HEK293 (cell line): ENCODE measurements at regions of chr6 and their contacts with region 1.

Region 1: GRCh38 chr6:100865525-100865924 is 15.6 kb downstream of the ASCC3 start:
- H3K4me3 ChIP-seq: no peak overlapping the region
- H3K27ac ChIP-seq: no peak overlapping the region
- H3K4me1 ChIP-seq: no peaks in the 10 kb centered on the region
- CTCF ChIP-seq: no peak

Region 2: GRCh38 chr6:100880853-100881706 is 15.6 kb after region 1 on chr6 and contains the start of gene ASCC3:
- CTCF ChIA-PET with region 1: interaction called, 4 read pairs
- POLR2A ChIA-PET with region 1: interaction called, 12 read pairs
- H3K4me3 ChIP-seq: peak within 1 kb of the TSS; percentile 98
- H3K27ac ChIP-seq: peak within 1 kb of the TSS; percentile 93
- H3K4me1 ChIP-seq: peaks cover 8% of the 10 kb centered on the region
- CTCF ChIP-seq: peak; percentile 9; the same call in 1 of the 2 replicates

Region 3: DNA sequence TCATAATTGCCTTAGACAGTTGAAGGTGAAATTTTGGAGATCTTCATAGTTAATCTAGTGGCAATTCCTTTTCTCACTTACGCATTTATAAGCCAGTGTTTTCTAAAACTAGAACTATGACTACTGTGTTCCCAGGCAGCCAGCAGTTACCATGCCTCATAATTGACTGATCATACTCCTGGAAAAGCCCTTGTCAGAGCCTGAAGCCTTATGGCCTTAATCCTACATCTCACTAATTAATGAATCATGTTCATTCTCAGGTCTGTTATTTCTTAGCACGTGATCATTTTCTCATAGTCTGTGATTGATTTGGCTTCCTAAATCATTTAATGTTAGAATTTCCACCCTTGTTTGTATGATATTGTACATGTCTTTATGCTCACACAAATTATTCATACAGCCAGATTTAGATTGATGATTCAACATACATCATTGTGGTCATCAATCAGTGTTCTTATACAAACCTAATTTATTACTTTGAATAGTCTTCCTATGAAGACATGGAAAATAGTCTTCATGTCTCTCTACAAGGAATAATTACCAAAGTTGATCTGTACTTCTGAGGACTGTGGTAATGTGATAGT is 148.2 kb after region 1 on chr6:
- CTCF ChIA-PET with region 1: no interaction called
- POLR2A ChIA-PET with region 1: no interaction called
- H3K4me3 ChIP-seq: no peak overlapping the region
- H3K27ac ChIP-seq: no peak overlapping the region
- H3K4me1 ChIP-seq: no peaks in the 10 kb centered on the region
- CTCF ChIP-seq: no peak